Esophagus squamous epithelium (tissue), 5 donors: ENCODE measurements at regions of chr17 and their contacts with region 1.

Region 1: DNA sequence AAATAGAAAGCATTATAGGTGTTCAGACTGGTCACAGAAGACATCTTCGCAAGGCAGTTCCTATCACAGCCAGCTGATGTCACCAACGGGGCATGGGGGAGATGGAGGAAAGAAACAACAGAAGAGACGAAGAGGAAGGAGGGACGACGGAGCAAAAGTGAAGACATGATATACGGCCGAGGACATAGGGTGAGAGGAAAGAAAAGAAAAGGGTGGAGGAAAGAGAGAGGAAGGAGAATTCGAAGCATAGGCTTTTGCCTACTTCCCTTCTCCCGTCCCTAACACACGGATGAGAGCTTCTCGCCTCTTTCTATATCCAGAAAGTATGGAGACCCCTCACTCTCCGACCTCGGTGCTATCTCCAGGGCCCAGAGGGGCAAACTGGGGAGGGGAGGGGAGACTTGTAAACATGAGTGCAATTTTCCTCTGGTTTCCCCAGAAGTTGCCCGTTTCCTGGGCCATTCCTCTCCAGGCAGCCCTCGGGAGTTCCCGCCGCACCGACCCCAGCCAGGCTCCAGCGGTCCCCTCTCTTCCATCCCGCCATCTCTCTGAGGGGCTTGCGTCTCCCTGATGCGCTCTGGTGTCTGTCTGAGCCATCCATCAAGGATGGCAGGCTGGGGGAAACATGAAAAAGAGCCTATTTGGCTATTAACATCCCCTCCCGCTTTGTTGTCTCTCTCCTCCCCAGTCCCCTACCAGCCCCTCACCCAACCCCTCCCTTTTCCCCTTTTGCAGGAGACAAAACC is 26.0 kb downstream of the COPZ2 start:
- DNase-seq: no peak
- H3K4me3 ChIP-seq: peak overlapping the region in 3 of 4 donors; percentile 19 to 58 (median 38)
- H3K27ac ChIP-seq: no peak overlapping the region
- H3K4me1 ChIP-seq: peaks cover 9 to 15% (median 10%) of the 10 kb centered on the region in 3 donors
- H3K27me3 ChIP-seq: peaks cover 0 to 91% (median 7%) of the 10 kb centered on the region in 4 donors
- CTCF ChIP-seq: peak in 3 of 6 experiments; percentile 8 to 28 (median 26)
- POLR2A ChIP-seq: no peak

Region 2: DNA sequence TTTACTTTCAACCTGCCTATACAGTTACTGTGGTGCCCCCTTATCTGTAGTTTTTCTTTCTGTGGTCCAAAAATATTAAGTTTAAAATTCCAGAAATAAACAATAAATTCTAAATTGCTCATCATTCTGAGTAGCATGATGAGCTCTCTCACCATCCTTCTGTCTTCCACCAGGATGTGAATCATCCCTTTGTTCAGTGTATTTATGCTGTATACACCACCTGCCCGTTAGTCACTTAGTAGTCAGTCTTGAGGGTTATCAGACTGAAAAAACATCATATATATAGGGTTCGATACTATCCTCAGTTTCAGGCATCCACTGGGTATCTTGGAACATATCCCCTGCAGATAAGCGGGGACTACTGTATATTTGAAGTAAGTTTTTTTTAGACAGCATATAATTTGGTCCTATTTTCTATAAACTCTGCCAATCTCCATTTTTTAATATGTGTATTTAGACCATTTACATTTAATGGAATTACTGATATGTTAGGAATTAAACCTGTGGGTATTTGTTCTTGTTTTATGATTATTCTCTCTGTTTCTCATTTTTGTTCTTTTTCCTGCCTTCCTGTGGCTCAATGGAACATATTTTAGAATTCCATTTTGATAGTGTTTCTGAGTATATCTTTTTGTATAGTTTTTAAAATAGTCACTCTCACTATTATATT is 247.5 kb before region 1 on chr17:
- intact Hi-C with region 1: no loop called
- DNase-seq: no peak
- H3K4me3 ChIP-seq: no peak overlapping the region
- H3K27ac ChIP-seq: no peak overlapping the region
- H3K4me1 ChIP-seq: no peaks in the 10 kb centered on the region
- H3K27me3 ChIP-seq: peaks cover 0 to 37% (median 0%) of the 10 kb centered on the region in 4 donors
- CTCF ChIP-seq: no peak
- POLR2A ChIP-seq: no peak

Region 3: DNA sequence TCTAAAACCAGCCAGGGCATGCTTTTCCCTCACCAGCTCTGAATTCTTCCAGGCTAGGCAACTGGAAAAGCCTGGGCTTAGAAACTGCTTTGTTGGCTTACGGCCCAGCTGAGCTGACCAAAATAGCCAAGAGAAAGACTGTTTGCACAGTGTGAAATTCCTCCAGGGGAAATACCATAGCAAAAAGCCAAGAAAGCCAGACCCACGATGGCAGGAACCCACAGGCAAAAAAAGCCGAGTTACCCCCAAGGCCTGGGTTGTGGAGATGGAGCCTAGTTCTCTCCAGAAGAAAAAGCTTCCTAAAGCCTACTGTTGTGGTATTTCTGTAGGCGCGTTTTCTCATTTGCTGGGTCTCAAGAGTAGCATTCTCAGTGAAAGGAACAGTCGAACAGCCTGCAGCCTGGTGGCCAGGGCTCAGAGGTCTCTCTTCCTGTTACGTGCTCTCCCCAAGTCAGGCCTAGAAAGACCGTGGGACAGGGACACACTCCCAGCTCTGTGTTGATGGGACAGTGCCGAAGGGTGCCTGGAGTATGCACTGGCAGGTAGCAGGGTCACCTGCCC is 106.3 kb before region 1 on chr17:
- intact Hi-C with region 1: no loop called
- DNase-seq: no peak
- H3K4me3 ChIP-seq: peak overlapping the region in 1 of 4 donors; percentile 27
- H3K27ac ChIP-seq: peak overlapping the region; percentile 61 to 84 (median 80)
- H3K4me1 ChIP-seq: peaks cover 16 to 76% (median 18%) of the 10 kb centered on the region in 3 donors
- H3K27me3 ChIP-seq: no peaks in the 10 kb centered on the region
- CTCF ChIP-seq: no peak
- POLR2A ChIP-seq: no peak

Region 4: DNA sequence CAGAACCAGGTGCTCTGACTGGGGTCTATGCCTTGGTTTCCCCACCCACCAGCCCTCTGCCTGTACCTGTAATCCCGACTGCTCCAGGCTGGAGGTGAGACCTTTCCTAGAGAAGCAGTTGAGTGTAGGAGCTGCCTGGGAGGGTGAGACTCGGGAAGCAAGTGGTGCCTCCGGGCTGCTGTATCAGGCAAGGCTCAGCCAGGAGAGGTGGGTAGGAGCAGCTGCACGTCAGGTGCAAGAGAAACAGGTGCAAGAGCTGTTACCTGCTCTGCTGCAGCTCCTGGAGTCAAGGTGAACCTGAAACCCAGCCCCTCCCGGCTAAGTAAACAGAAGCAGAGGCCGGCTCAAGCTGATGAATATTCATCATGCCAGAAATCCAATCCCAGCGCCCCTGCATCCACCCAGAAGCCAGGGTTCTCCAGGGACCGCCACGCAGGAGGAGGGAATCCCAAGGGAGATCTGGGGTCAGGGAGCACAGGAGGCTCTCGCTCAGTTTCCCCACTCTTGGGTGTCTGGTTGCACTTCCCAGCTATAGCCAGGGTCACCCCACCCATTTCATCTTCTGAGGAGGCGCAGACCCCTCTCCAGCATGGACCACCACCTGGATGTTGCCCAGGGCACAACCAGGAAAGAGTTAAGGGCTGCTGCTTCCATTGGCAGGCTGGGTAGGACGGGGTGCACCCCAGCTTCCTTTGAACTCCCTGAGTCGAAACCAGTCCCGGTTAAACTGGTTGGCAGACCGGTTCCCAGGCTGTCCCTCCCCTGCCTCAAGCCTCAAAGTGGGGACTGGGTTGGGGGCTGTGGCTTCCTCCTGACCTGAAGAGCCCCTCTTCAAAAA is 53.8 kb before region 1 on chr17 and contains the start of gene PRR15L:
- intact Hi-C with region 1: loop called (anchors 10 kb)
- DNase-seq: no peak
- H3K4me3 ChIP-seq: peak within 1 kb of the TSS; percentile 26 to 54 (median 43)
- H3K27ac ChIP-seq: peak within 1 kb of the TSS; percentile 60 to 84 (median 74)
- H3K4me1 ChIP-seq: peaks cover 13 to 78% (median 16%) of the 10 kb centered on the region in 3 donors
- H3K27me3 ChIP-seq: no peaks in the 10 kb centered on the region
- CTCF ChIP-seq: no peak
- POLR2A ChIP-seq: peak in 1 of 4 donors; percentile 35
- total RNA-seq, gene PRR15L: 3.3 to 12.5 (median 7.1) TPM

Region 5: GRCh38 chr17:48054238-48055185 is 42.9 kb after region 1 on chr17:
- intact Hi-C with region 1: no loop called
- DNase-seq: no peak
- H3K4me3 ChIP-seq: peak overlapping the region in 3 of 4 donors; percentile 34 to 93 (median 77)
- H3K27ac ChIP-seq: peak overlapping the region; percentile 97 to 100 (median 98)
- H3K4me1 ChIP-seq: peaks cover 58 to 83% (median 58%) of the 10 kb centered on the region in 3 donors
- H3K27me3 ChIP-seq: no peaks in the 10 kb centered on the region
- CTCF ChIP-seq: no peak
- POLR2A ChIP-seq: peak in 1 of 4 donors; percentile 25

Region 6: GRCh38 chr17:48148854-48149786 is 137.5 kb after region 1 on chr17:
- intact Hi-C with region 1: no loop called
- DNase-seq: no peak
- H3K4me3 ChIP-seq: no peak overlapping the region
- H3K27ac ChIP-seq: no peak overlapping the region
- H3K4me1 ChIP-seq: no peaks in the 10 kb centered on the region
- H3K27me3 ChIP-seq: peaks cover 0 to 100% (median 2%) of the 10 kb centered on the region in 4 donors
- CTCF ChIP-seq: no peak
- POLR2A ChIP-seq: no peak